ENCODE measurements at regions of chr4 and their contacts with region 1.

Region 1: GRCh38 chr4:15655229-15656037 is at the start of gene FBXL5:
- DNase-seq: peak; percentile 86 to 96
- ATAC-seq: peak; percentile 80 to 94 (median 84)
- H3K4me3 ChIP-seq: peak within 1 kb of the TSS; percentile 74
- H3K4me3 Mint-ChIP-seq: peak within 1 kb of the TSS; percentile 99
- H3K27ac ChIP-seq: peak within 1 kb of the TSS; percentile 96
- H3K27ac Mint-ChIP-seq: peak within 1 kb of the TSS; percentile 94 to 96
- H3K4me1 ChIP-seq: peaks cover 23% of the 10 kb centered on the region
- H3K4me1 Mint-ChIP-seq: peaks cover 42 to 46% of the 10 kb centered on the region in 2 donors
- H3K27me3 ChIP-seq: no peaks in the 10 kb centered on the region
- H3K27me3 Mint-ChIP-seq: no peaks in the 10 kb centered on the region
- CTCF ChIP-seq: no peak
- total RNA-seq, gene FBXL5: 80.2 to 111 (median 92.8) TPM

Region 2: GRCh38 chr4:15479089-15479912 is 176.1 kb before region 1 on chr4:
- intact Hi-C with region 1: loop called (anchors 10 kb)
- DNase-seq: peak in 1 of 2 donors; percentile 44
- ATAC-seq: no peak
- H3K4me3 ChIP-seq: no peak overlapping the region
- H3K4me3 Mint-ChIP-seq: no peak overlapping the region
- H3K27ac ChIP-seq: no peak overlapping the region
- H3K27ac Mint-ChIP-seq: no peak overlapping the region
- H3K4me1 ChIP-seq: no peaks in the 10 kb centered on the region
- H3K4me1 Mint-ChIP-seq: no peaks in the 10 kb centered on the region
- H3K27me3 ChIP-seq: no peaks in the 10 kb centered on the region
- H3K27me3 Mint-ChIP-seq: no peaks in the 10 kb centered on the region
- CTCF ChIP-seq: no peak

Region 3: DNA sequence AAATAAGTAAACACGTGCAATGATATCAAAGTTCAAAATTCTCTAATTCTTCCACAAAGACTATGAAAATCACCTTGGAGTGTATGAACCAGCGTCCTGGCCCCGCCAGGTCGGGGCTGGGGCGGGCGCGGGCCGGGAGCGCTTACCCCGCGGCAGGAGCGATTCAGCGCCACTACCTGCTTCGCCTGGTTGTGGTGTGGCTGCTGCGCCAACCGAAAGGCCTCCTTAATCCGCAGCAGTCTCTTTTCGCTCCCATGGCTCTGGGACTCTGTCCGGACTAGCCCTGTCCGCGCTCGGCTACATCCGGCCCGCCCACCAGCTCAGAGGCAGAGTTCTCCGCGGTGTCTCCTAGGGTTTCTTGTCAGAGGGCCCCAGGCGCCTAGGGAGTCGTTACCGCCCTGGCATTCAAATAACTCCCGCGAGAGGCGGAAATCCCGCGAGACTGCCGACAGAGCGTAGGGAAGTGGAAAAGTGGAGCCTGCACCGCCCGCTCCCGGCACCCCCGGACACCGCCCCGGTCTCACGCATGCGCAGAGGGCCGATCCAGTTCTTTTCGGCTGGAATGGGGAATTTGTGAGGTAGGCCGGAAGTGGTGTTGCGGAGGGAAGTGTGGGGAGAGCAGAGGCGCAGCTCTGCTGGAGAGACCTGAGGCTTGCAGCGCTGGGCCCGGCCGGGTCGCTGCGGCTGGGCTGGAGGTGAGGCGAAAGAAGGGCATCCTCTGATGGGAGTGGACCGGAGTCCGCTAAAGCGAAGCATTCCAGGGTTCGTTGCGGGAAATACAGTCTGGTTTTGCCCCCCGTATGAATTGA is 26.0 kb after region 1 on chr4 and contains the start of gene FAM200B:
- intact Hi-C with region 1: loop called (anchors 2 kb)
- DNase-seq: peak; percentile 95 to 96
- ATAC-seq: peak; percentile 95 to 98 (median 96)
- H3K4me3 ChIP-seq: peak within 1 kb of the TSS; percentile 93
- H3K4me3 Mint-ChIP-seq: peak within 1 kb of the TSS; percentile 93
- H3K27ac ChIP-seq: peak within 1 kb of the TSS; percentile 76
- H3K27ac Mint-ChIP-seq: peak within 1 kb of the TSS; percentile 97
- H3K4me1 ChIP-seq: peaks cover 4% of the 10 kb centered on the region
- H3K4me1 Mint-ChIP-seq: peaks cover 31 to 43% of the 10 kb centered on the region in 2 donors
- H3K27me3 ChIP-seq: no peaks in the 10 kb centered on the region
- H3K27me3 Mint-ChIP-seq: no peaks in the 10 kb centered on the region
- CTCF ChIP-seq: no peak
- total RNA-seq, gene FAM200B: 14.3 to 15.6 (median 14.5) TPM

Region 4: GRCh38 chr4:16001484-16001858 is 346.0 kb after region 1 on chr4:
- intact Hi-C with region 1: no loop called
- DNase-seq: peak; percentile 47 to 79
- ATAC-seq: peak; percentile 83 to 89 (median 88)
- H3K4me3 ChIP-seq: no peak overlapping the region
- H3K4me3 Mint-ChIP-seq: no peak overlapping the region
- H3K27ac ChIP-seq: no peak overlapping the region
- H3K27ac Mint-ChIP-seq: no peak overlapping the region
- H3K4me1 ChIP-seq: peaks cover 9% of the 10 kb centered on the region
- H3K4me1 Mint-ChIP-seq: peaks cover 5 to 6% of the 10 kb centered on the region in 2 donors
- H3K27me3 ChIP-seq: no peaks in the 10 kb centered on the region
- H3K27me3 Mint-ChIP-seq: no peaks in the 10 kb centered on the region
- CTCF ChIP-seq: peak; percentile 78